ENCODE measurements at regions of chr10 and their contacts with region 1.

Region 1: DNA sequence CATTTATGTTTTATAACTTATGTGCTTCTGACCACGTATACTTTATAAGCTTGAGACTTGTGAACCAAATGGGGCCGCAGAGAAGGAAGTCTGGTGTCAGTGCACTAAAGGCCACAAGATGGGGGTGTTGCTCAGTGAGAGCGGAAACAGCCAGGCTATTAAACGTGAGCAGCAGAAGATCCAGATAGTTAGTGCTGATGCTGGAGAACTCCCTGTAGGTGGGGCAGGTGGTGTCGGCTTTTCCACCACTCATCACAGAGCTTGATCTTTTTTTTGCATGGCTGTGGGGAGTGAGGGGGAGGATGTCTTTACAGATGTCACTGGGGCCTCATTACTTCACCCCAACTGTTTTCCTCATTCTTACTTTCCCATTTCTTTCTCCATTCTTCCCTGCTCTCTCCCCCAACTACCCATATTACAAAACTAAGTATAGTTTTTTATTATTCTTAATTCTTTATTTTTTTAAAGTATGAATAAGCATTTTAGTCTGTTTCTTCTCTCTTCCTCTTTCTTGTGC is 34.7 kb downstream of the ACADSB start:
- DNase-seq: peak in 4 of 5 donors; percentile 30 to 43 (median 38)
- H3K4me3 ChIP-seq: no peak overlapping the region
- H3K4me3 Mint-ChIP-seq: no peak overlapping the region
- H3K27ac ChIP-seq: no peak overlapping the region
- H3K27ac Mint-ChIP-seq: no peak overlapping the region
- H3K4me1 ChIP-seq: no peaks in the 10 kb centered on the region
- H3K4me1 Mint-ChIP-seq: peaks cover 0 to 13% (median 4%) of the 10 kb centered on the region in 4 donors
- H3K27me3 ChIP-seq: no peaks in the 10 kb centered on the region
- H3K27me3 Mint-ChIP-seq: no peaks in the 10 kb centered on the region

Region 2: GRCh38 chr10:123380497-123381085 is 337.1 kb after region 1 on chr10:
- CTCF ChIA-PET with region 1: interaction called, 7 read pairs
- POLR2A ChIA-PET with region 1: no interaction called
- intact Hi-C with region 1: loop called (anchors 1 kb)
- DNase-seq: peak in 3 of 5 donors; percentile 2 to 19 (median 5)
- H3K4me3 ChIP-seq: no peak overlapping the region
- H3K4me3 Mint-ChIP-seq: no peak overlapping the region
- H3K27ac ChIP-seq: no peak overlapping the region
- H3K27ac Mint-ChIP-seq: peak overlapping the region in 1 of 7 donors; percentile 0
- H3K4me1 ChIP-seq: no peaks in the 10 kb centered on the region
- H3K4me1 Mint-ChIP-seq: peaks cover 0 to 2% (median 0%) of the 10 kb centered on the region in 4 donors
- H3K27me3 ChIP-seq: no peaks in the 10 kb centered on the region
- H3K27me3 Mint-ChIP-seq: peaks cover 10 to 13% of the 10 kb centered on the region in 2 donors

Region 3: GRCh38 chr10:123559066-123559822 is 515.8 kb after region 1 on chr10:
- CTCF ChIA-PET with region 1: interaction called, 33 read pairs
- POLR2A ChIA-PET with region 1: no interaction called
- intact Hi-C with region 1: no loop called
- DNase-seq: peak; percentile 39 to 64 (median 43)
- H3K4me3 ChIP-seq: no peak overlapping the region
- H3K4me3 Mint-ChIP-seq: no peak overlapping the region
- H3K27ac ChIP-seq: no peak overlapping the region
- H3K27ac Mint-ChIP-seq: peak overlapping the region in 2 of 7 donors; percentile 32 to 38
- H3K4me1 ChIP-seq: no peaks in the 10 kb centered on the region
- H3K4me1 Mint-ChIP-seq: peaks cover 0 to 2% (median 0%) of the 10 kb centered on the region in 4 donors
- H3K27me3 ChIP-seq: no peaks in the 10 kb centered on the region
- H3K27me3 Mint-ChIP-seq: peaks cover 5 to 18% of the 10 kb centered on the region in 2 donors